Right ventricle myocardium superior (tissue), 1 donor: ENCODE measurements at regions of chr1 and their contacts with region 1.

Region 1: DNA sequence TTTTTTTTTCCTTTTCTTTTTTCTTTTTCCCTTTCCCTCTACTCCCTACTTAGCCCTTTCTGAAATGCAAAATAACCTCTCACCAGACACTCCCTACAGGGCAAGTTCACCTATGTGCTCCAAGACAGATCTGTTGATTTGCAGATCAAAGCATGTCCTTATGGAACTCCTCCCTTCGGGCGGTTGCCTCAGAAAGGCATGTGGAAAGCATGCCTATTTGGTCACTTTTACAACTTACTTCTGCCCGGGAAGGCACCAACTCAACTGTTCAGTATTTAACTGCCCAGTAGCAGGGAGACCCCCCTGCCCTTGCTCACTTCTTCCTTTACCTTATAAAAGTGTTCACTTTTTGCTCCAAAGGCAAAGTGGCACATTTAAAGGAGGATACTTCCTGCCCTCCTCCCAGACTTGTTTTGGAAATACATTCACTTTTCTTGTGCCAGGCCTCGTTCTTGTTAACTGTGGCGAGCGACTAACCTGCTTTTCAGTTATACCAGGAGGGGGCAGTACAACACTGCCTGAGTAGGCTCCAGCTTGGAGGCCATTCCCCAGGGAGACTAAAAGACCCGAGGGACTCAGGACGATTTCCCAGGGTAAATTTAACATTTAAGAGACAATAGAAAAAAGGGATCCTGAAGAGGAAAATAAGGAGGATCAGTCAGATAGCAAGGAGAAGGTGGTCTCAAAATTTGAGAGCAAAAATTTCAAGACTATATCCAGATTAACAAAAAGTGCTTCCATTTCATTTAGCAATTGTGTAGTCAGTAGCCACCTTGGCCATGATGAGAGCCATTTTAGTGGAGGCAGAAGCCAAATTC is 12.3 kb upstream of the SLAMF7 start:
- DNase-seq: no peak
- ATAC-seq: peak; percentile 87

Region 2: GRCh38 chr1:160070243-160071163 is 656.2 kb before region 1 on chr1:
- intact Hi-C with region 1: no loop called
- DNase-seq: peak; percentile 86
- ATAC-seq: peak; percentile 98

Region 3: DNA sequence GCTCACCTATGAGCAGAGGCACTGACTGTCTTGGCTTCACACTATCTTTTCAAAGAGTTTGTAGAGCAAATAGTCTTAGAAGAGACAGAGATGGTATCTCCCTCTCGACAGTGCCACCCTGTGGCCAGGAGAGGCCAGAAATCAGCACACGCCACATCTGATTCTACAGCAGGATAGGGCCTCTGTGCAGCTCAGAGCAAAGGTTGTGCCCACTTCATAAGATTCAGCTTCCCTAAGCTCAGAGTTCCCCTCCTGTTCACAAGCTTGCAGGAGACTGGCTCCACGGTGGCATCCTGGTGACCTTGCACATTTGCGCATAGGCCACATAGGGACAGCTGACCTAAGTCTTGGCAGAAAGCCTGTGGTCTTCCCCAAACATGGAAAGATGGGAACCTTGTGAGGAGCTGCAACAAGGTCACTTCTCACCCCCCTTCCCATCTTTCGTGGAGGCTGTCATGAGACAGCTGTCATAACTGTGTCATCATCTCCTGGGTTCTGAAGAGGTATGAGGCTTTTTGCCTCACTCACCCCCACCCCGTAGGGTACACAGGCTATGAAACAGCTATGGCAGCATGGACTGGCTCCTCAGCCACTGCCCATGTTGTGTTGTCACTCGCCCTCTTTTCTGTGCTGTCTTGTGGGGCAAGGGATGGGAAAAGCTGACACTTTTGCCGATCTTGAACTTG is 224.9 kb after region 1 on chr1:
- intact Hi-C with region 1: loop called (anchors 5 kb)
- DNase-seq: peak; percentile 69
- ATAC-seq: peak; percentile 88

Region 4: GRCh38 chr1:160997323-160998038 is 270.8 kb after region 1 on chr1:
- intact Hi-C with region 1: loop called (anchors 5 kb)
- DNase-seq: peak; percentile 76
- ATAC-seq: peak; percentile 88